Posterior cingulate gyrus (tissue), 11 donors: ENCODE measurements at regions of chr1 and their contacts with region 1.

Region 1: DNA sequence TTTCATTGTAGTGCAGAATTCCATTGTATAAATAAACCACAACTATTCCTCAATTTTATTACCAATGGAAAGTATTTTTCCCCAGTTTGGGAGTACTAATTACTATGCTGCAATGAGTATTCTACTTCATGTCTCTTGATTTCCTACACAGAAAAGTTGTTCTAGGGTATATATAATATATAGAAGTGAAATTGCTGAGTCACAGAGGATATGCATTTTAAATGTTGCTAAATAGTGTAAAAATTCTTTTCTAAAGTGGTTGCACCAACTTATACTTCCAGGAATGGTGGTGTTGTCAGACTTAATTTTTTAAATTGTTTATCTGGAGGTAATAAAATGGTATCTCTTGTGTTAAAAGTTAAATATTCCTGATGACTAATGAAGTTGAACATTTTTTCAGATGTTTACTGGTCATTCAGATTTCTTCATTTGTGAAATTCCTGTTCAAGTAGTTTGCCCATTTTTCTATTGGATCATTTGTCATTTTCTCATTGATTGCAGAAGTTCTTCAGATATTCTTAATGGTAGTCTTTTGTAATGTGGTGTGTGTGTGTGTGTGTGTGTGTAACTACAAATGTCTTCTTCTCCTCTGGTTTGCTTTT is 19.1 kb upstream of the MYOG start:
- DNase-seq: no peak

Region 2: DNA sequence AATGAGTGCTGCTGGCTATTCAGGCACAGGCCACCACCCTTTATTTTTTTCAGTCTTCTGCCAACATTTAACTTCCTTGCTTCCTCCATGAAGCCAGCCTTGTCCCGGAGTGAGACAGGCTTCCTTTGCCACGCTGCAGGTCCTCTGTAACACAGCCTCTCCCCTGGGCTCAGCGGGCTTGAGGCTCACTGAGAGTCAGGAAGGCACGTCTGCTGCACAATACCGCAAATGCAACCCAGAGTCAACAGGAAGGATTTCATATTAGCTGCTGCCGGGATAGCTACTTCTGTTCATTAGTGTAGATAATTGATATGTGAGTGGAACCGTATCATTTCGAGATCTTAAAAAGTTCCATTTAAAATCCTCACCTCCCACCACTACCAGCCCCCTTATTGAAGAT is 41.6 kb before region 1 on chr1:
- intact Hi-C with region 1: loop called (anchors 5 kb)
- DNase-seq: peak in 1 of 10 donors; percentile 61

Region 3: DNA sequence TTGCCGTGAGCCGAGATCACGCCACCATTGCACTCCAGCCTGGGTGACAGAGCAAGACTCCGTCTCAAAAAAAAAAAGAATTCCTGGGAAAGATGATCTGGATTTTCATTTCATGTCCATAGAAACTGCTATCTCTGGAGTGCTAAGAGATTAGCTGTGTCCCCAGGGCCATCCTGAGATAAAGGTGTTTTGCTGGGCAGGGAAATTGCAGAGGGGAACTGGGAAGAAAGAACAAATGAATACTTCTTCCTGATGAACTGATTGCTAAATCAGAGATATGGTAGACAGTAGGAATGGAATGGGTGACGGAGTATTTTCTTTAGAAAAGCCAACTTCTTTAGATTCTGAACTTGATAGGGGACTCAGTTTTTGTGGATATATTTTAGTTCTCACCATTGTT is 775.7 kb after region 1 on chr1:
- intact Hi-C with region 1: no loop called
- DNase-seq: no peak